K562 (cell line): ENCODE measurements at regions of chr18 and their contacts with region 1.

Region 1: DNA sequence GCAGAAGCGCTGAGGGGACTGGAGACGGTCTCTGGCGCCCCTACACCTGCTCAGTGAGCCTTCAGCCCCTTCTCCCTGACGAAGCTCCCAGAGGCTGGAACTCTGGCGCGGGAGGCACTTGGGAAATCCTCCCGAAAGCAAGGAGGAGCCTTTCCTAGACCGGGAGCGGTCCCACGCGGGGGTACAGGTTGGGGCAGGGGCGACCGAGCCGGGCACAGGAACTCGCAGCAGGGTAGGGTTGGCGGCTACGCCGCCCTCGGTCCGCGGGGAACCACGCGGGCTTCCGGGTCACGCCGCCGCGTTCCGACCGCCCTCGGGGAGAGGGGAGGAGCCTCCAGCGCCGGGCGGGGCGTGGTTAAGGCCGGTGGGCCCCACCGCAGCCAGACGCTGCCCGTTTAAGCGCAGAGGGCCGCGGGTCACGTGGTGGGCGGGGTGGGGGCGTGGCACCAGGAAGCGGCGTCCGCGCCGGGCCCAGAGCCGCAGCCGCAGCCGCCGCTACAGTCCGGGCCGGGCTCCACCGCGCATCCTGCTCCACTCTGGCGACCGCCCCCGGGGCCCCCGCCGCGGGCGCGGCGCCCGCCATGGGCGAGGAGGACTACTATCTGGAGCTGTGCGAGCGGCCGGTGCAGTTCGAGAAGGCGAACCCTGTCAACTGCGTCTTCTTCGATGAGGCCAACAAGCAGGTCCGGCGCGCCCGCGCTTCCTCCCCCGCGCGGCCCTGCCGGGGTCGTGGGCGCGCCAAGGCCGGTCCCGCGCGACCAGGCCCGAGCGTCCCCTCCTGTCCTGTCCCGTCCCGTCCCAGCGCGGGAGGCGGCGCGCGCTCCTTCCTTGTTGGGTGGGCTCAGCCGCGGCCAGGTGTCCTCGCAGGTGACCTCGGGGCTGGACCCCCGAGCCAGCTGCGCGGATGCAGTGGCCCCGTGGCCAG is at the start of gene RMC1:
- DNase-seq: peak; percentile 98
- ATAC-seq: peak; percentile 92
- H3K4me3 ChIP-seq: peak within 1 kb of the TSS; percentile 84
- H3K27ac ChIP-seq: peak within 1 kb of the TSS; percentile 87
- H3K4me1 ChIP-seq: peaks cover 20 to 21% of the 10 kb centered on the region in 2 experiments; a peak in 4 of 5 replicates
- H3K27me3 ChIP-seq: no peaks in the 10 kb centered on the region
- CTCF ChIP-seq: peak; percentile 33 to 53 (median 45)
- EP300 ChIP-seq: peak; percentile 18; the same call in 1 of the 2 replicates
- POLR2A ChIP-seq: peak; percentile 97
- RAD21 ChIP-seq: peak in 1 of 2 experiments; percentile 50; a peak in 3 of 4 replicates
- polyA plus RNA-seq, gene RMC1: 7.5 to 10.5 TPM

Region 2: DNA sequence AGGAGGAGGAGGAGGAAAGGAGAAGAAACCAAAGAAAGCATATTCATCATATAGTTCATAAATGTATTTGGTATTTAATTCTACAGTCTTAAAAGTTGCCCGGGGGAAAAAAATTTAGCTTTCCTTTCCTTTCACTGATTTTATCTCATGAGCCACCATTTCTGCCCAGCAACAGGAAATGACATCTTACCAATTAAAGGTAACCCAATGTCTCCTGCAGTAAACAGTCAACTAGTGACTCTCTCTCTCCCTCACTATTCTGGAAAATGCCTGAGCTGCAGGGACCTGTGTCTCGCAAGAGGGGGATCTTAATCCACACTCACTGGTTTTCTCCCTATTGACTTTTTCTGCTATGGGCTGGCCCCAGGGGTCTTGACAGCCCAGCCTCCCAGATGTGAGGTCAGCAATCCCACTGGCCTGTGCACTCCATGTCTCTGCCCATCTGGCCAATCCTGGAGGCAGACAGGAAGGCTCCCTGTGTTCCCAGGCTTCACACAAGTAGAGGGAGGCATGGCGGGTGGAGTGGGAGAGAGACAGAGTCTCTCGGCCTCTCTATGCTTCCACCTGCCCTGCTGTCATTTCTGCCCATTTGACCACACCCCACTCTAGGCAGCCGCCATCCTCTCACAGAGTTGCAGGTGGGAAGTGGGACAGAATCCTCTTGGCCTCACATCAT is 453.5 kb before region 1 on chr18:
- CTCF ChIA-PET with region 1: no interaction called
- POLR2A ChIA-PET with region 1: no interaction called
- in situ Hi-C with region 1: no loop called
- intact Hi-C with region 1: loop called (anchors 10 kb)
- DNase-seq: no peak
- ATAC-seq: no peak; the same call in 2 of the 3 replicates
- H3K4me3 ChIP-seq: no peak overlapping the region
- H3K27ac ChIP-seq: no peak overlapping the region
- H3K4me1 ChIP-seq: no peaks in the 10 kb centered on the region
- H3K27me3 ChIP-seq: peaks cover 37 to 41% of the 10 kb centered on the region in 2 experiments
- CTCF ChIP-seq: no peak
- EP300 ChIP-seq: no peak
- POLR2A ChIP-seq: no peak
- RAD21 ChIP-seq: no peak

Region 3: GRCh38 chr18:23231340-23232021 is 271.8 kb before region 1 on chr18:
- CTCF ChIA-PET with region 1: no interaction called
- POLR2A ChIA-PET with region 1: no interaction called
- in situ Hi-C with region 1: no loop called
- intact Hi-C with region 1: loop called (anchors 10 kb)
- DNase-seq: peak in 1 of 4 experiments; percentile 23
- ATAC-seq: peak; percentile 59
- H3K4me3 ChIP-seq: no peak overlapping the region
- H3K27ac ChIP-seq: no peak overlapping the region
- H3K4me1 ChIP-seq: peaks cover 0 to 6% of the 10 kb centered on the region in 2 experiments; a peak in 1 of 5 replicates
- H3K27me3 ChIP-seq: peaks cover 60 to 62% of the 10 kb centered on the region in 2 experiments
- CTCF ChIP-seq: no peak
- EP300 ChIP-seq: no peak
- POLR2A ChIP-seq: no peak
- RAD21 ChIP-seq: no peak

Region 4: DNA sequence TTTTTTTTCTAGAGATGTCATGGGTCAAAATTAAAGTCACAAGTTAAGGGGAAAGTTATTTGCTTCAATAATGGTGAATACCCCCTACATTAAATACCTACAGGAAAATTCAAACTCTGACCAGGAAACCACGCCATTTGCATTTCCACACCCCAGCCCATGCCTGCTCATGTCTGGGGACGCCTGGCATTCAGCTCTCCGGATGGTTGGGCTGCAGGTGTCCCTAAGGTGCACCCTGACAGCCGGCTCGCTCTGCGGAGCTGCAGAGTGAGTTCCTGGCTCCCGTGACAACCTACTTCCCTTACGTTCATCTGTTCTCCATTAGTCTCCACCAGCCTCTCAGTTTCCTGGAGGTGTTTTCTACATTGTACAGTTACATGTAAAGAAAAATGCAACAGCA is 172.9 kb before region 1 on chr18:
- CTCF ChIA-PET with region 1: no interaction called
- POLR2A ChIA-PET with region 1: no interaction called
- in situ Hi-C with region 1: no loop called
- intact Hi-C with region 1: no loop called
- DNase-seq: no peak
- ATAC-seq: no peak
- H3K4me3 ChIP-seq: no peak overlapping the region
- H3K27ac ChIP-seq: no peak overlapping the region
- H3K4me1 ChIP-seq: no peaks in the 10 kb centered on the region
- H3K27me3 ChIP-seq: no peaks in the 10 kb centered on the region
- CTCF ChIP-seq: no peak
- EP300 ChIP-seq: no peak
- POLR2A ChIP-seq: no peak
- RAD21 ChIP-seq: no peak

Region 5: GRCh38 chr18:23586249-23587196 is 83.2 kb after region 1 on chr18 and contains the start of gene NPC1:
- CTCF ChIA-PET with region 1: interaction called, 12 read pairs
- POLR2A ChIA-PET with region 1: interaction called, 3 read pairs
- in situ Hi-C with region 1: no loop called
- intact Hi-C with region 1: loop called (anchors 1 kb)
- DNase-seq: peak; percentile 93 to 97 (median 94)
- ATAC-seq: peak; percentile 97
- H3K4me3 ChIP-seq: peak within 1 kb of the TSS; percentile 93
- H3K27ac ChIP-seq: peak within 1 kb of the TSS; percentile 97
- H3K4me1 ChIP-seq: peaks cover 8 to 11% of the 10 kb centered on the region in 2 experiments; a peak in 4 of 5 replicates
- H3K27me3 ChIP-seq: peaks cover 10 to 19% of the 10 kb centered on the region in 2 experiments; a peak in 3 of 5 replicates
- CTCF ChIP-seq: peak; percentile 86 to 90 (median 88)
- EP300 ChIP-seq: peak; percentile 27; the same call in 1 of the 2 replicates
- POLR2A ChIP-seq: peak; percentile 97
- RAD21 ChIP-seq: peak; percentile 82
- polyA plus RNA-seq, gene NPC1: 17.1 to 19.1 TPM

Region 6: GRCh38 chr18:23710068-23710527 is 206.8 kb after region 1 on chr18:
- CTCF ChIA-PET with region 1: no interaction called
- POLR2A ChIA-PET with region 1: no interaction called
- in situ Hi-C with region 1: loop called (anchors 10 kb)
- intact Hi-C with region 1: loop called (anchors 1 kb)
- DNase-seq: peak; percentile 59 to 73 (median 64)
- ATAC-seq: peak; percentile 87
- H3K4me3 ChIP-seq: 0 out of 2 replicates have a peak overlapping the region, but pooled peaks have one; percentile 1
- H3K27ac ChIP-seq: no peak overlapping the region
- H3K4me1 ChIP-seq: peaks cover 0 to 7% of the 10 kb centered on the region in 2 experiments; a peak in 1 of 5 replicates
- H3K27me3 ChIP-seq: peaks cover 6% of the 10 kb centered on the region in 2 experiments
- CTCF ChIP-seq: 0 out of 6 replicates have a peak, but pooled peaks of 2 of the 3 experiments have one; percentile 30 to 31
- EP300 ChIP-seq: peak; percentile 74
- POLR2A ChIP-seq: no peak
- RAD21 ChIP-seq: 0 out of 4 replicates have a peak, but pooled peaks of 1 of the 2 experiments have one; percentile 5

Region 7: GRCh38 chr18:23812546-23813440 is 309.5 kb after region 1 on chr18:
- CTCF ChIA-PET with region 1: no interaction called
- POLR2A ChIA-PET with region 1: no interaction called
- in situ Hi-C with region 1: no loop called
- intact Hi-C with region 1: loop called (anchors 5 kb)
- DNase-seq: peak; percentile 12 to 24 (median 22)
- ATAC-seq: peak; percentile 53; the same call in 1 of the 3 replicates
- H3K4me3 ChIP-seq: no peak overlapping the region
- H3K27ac ChIP-seq: no peak overlapping the region
- H3K4me1 ChIP-seq: no peaks in the 10 kb centered on the region
- H3K27me3 ChIP-seq: peaks cover 0 to 21% of the 10 kb centered on the region in 2 experiments; a peak in 3 of 5 replicates
- CTCF ChIP-seq: peak in 2 of 3 experiments; percentile 13 to 71; a peak in 4 of 6 replicates
- EP300 ChIP-seq: no peak
- POLR2A ChIP-seq: no peak
- RAD21 ChIP-seq: peak; percentile 57 to 81